ENCODE measurements at regions of chr7 and their contacts with region 1.

Region 1: GRCh38 chr7:73828107-73828803 is 2.5 kb upstream of the CLDN4 start:
- DNase-seq: peak; percentile 23
- H3K4me3 Mint-ChIP-seq: no peak overlapping the region
- H3K27ac Mint-ChIP-seq: no peak overlapping the region
- H3K4me1 Mint-ChIP-seq: peaks cover 32% of the 10 kb centered on the region
- H3K27me3 Mint-ChIP-seq: peaks cover 9% of the 10 kb centered on the region

Region 2: GRCh38 chr7:73856941-73857340 is 28.7 kb after region 1 on chr7:
- CTCF ChIA-PET with region 1: interaction called, 39 read pairs
- POLR2A ChIA-PET with region 1: no interaction called
- DNase-seq: no peak
- H3K4me3 Mint-ChIP-seq: no peak overlapping the region
- H3K27ac Mint-ChIP-seq: no peak overlapping the region
- H3K4me1 Mint-ChIP-seq: peaks cover 18% of the 10 kb centered on the region
- H3K27me3 Mint-ChIP-seq: peaks cover 22% of the 10 kb centered on the region